ENCODE measurements at regions of chr15 and their contacts with region 1.

Region 1: GRCh38 chr15:43440721-43441281 is 52.2 kb downstream of the TP53BP1 start:
- DNase-seq: no peak
- ATAC-seq: peak; percentile 96

Region 2: DNA sequence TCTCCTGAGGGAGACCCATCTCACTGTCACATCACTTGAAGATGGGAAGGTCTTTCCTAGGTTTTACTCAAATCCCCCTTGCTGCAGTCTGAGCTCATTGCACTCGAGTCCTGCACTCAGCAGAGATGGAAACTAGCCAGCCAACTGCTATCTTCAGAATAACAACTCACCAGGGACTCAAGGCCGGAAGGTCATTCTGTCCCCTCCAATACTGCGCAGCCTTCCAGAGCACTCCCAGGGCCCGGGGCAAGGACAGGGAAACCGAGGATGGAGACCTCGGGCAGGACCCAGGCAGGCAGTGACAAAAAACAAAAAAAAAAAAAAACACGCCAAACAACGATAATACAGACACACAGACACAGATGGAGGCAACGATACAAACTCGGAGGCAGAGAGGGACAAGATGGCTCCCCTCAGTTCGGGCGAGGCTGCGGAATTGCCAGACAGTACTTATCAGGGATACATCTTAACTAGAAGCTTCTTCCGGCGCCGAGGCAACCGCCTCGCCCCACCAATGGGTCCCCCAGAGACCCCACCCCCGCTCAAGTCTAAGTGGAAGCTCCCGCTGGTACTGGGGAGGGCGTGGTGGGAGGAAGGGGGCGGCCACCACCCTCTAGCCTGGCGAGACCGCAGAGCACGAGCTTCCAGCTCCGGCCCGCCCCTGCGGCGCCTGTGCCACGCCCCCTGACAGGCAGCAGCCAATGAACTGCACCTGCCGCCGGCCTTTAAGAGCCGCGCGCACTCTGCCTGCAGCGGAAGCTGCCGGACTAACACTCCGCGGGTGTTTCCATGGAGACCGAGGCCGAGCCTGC is 69.6 kb after region 1 on chr15:
- intact Hi-C with region 1: loop called (anchors 5 kb)
- DNase-seq: peak; percentile 100
- ATAC-seq: peak; percentile 96

Measured in left ventricle myocardium superior (tissue), 1 donor.